ENCODE measurements at regions of chr2 and their contacts with region 1.

Region 1: DNA sequence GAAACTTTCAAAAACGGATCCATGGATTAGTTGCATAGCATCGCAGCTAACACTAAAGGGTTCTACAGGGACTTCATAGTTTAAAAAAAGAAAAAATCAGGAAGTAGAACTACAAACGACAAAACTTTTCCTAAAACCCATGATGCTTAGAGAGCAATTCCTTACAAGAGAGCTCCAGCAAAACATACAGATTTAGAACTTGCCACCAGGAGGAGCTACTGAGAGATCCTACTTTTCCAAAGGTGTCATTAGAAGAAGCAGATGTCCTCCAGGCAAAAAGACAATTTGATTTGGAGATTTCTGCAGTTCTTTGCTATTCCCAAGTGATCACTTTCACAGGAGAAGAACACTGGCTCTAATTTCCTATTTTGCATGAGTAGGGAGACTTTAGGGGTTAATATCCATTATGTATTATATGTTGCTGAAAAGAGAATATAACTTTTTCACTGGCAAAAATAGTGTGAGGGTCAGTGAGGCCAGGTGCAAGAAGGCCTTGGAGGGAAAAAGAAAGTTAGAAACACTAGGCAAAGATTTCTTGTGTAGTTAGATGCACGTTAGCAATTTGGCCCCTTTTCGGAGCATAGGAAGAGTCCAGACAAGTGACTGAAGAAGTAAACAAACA is 436.2 kb downstream of the SUCLG1 start:
- DNase-seq: peak in 2 of 9 experiments; percentile 32 to 44
- ATAC-seq: no peak
- H3K4me3 ChIP-seq: no peak overlapping the region
- H3K4me3 Mint-ChIP-seq: no peak overlapping the region
- H3K27ac ChIP-seq: no peak overlapping the region
- H3K27ac Mint-ChIP-seq: no peak overlapping the region
- H3K4me1 ChIP-seq: no peaks in the 10 kb centered on the region
- H3K4me1 Mint-ChIP-seq: no peaks in the 10 kb centered on the region
- H3K27me3 ChIP-seq: no peaks in the 10 kb centered on the region
- H3K27me3 Mint-ChIP-seq: peaks cover 7% of the 10 kb centered on the region
- CTCF ChIP-seq: peak; percentile 47

Region 2: DNA sequence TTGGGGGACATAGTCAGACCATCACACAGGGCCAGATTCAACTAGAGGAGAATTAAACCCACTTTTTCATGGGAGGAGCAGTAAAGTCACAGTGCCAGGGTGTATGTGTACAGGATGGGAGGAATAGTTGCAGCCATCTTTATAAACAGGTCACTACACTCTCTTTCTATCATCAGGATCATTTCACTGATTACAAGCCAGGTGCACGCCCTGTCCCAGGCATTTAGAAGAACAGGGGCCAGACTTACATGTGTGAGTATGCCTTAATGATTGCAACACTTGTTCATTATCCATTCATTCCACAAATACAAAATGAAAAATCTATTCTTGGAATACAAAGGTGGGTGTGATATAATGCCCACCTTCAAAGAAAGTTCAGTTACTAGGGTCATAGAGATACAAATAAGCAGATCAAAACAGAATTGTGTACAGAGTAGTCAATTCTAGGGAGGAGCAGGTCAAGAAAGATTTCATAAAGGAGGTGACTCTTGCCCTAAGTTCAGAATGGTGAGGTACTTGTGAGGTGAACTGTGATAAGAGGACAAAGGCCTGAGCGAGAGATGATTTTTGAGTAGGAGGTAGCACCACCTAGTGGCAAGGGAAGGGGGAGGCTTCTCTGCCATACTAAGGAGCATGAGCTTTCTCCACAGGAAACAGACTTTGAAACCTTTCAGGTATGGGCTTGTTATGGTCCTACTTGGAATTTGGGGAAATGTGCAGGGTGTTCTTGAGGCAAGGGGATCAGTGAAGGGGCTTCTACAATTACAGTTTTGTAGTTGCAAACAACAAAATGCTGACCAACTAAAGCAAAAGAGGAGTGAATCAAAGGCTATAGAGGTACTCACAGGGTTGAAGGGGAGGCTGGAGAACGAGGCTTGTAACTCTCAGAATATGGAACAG is 279.8 kb after region 1 on chr2:
- CTCF ChIA-PET with region 1: interaction called, 3 read pairs
- POLR2A ChIA-PET with region 1: no interaction called
- intact Hi-C with region 1: loop called in 1 of 2 experiments (anchors 5 kb)
- DNase-seq: peak in 5 of 9 experiments; percentile 14 to 55 (median 46)
- ATAC-seq: no peak
- H3K4me3 ChIP-seq: no peak overlapping the region
- H3K4me3 Mint-ChIP-seq: no peak overlapping the region
- H3K27ac ChIP-seq: no peak overlapping the region
- H3K27ac Mint-ChIP-seq: no peak overlapping the region
- H3K4me1 ChIP-seq: no peaks in the 10 kb centered on the region
- H3K4me1 Mint-ChIP-seq: no peaks in the 10 kb centered on the region
- H3K27me3 ChIP-seq: no peaks in the 10 kb centered on the region
- H3K27me3 Mint-ChIP-seq: peaks cover 15% of the 10 kb centered on the region
- CTCF ChIP-seq: peak; percentile 66

Region 3: GRCh38 chr2:84314901-84315330 is 292.0 kb after region 1 on chr2:
- CTCF ChIA-PET with region 1: no interaction called
- POLR2A ChIA-PET with region 1: no interaction called
- intact Hi-C with region 1: loop called in 1 of 2 experiments (anchors 1 kb)
- DNase-seq: peak; percentile 50 to 76 (median 71)
- ATAC-seq: peak; percentile 65
- H3K4me3 ChIP-seq: no peak overlapping the region
- H3K4me3 Mint-ChIP-seq: no peak overlapping the region
- H3K27ac ChIP-seq: no peak overlapping the region
- H3K27ac Mint-ChIP-seq: no peak overlapping the region
- H3K4me1 ChIP-seq: no peaks in the 10 kb centered on the region
- H3K4me1 Mint-ChIP-seq: peaks cover 3% of the 10 kb centered on the region
- H3K27me3 ChIP-seq: no peaks in the 10 kb centered on the region
- H3K27me3 Mint-ChIP-seq: peaks cover 15% of the 10 kb centered on the region
- CTCF ChIP-seq: peak; percentile 72

Region 4: GRCh38 chr2:84424152-84424551 is 401.2 kb after region 1 on chr2:
- CTCF ChIA-PET with region 1: no interaction called
- POLR2A ChIA-PET with region 1: no interaction called
- intact Hi-C with region 1: loop called in 1 of 2 experiments (anchors 5 kb)
- DNase-seq: no peak
- ATAC-seq: no peak
- H3K4me3 ChIP-seq: no peak overlapping the region
- H3K4me3 Mint-ChIP-seq: no peak overlapping the region
- H3K27ac ChIP-seq: no peak overlapping the region
- H3K27ac Mint-ChIP-seq: no peak overlapping the region
- H3K4me1 ChIP-seq: no peaks in the 10 kb centered on the region
- H3K4me1 Mint-ChIP-seq: peaks cover 2% of the 10 kb centered on the region
- H3K27me3 ChIP-seq: no peaks in the 10 kb centered on the region
- H3K27me3 Mint-ChIP-seq: no peaks in the 10 kb centered on the region
- CTCF ChIP-seq: peak; percentile 41

Region 5: GRCh38 chr2:84631047-84631446 is 608.1 kb after region 1 on chr2:
- CTCF ChIA-PET with region 1: no interaction called
- POLR2A ChIA-PET with region 1: no interaction called
- intact Hi-C with region 1: loop called in 1 of 2 experiments (anchors 5 kb)
- DNase-seq: peak in 2 of 9 experiments; percentile 40 to 57
- ATAC-seq: peak; percentile 51
- H3K4me3 ChIP-seq: no peak overlapping the region
- H3K4me3 Mint-ChIP-seq: no peak overlapping the region
- H3K27ac ChIP-seq: no peak overlapping the region
- H3K27ac Mint-ChIP-seq: no peak overlapping the region
- H3K4me1 ChIP-seq: peaks cover 22% of the 10 kb centered on the region
- H3K4me1 Mint-ChIP-seq: peaks cover 41% of the 10 kb centered on the region
- H3K27me3 ChIP-seq: no peaks in the 10 kb centered on the region
- H3K27me3 Mint-ChIP-seq: no peaks in the 10 kb centered on the region
- CTCF ChIP-seq: peak; percentile 51